Activated T-helper 1 cell treated with anti-CD3 and anti-CD28 coated beads, Interleukin-12 subunit alpha, Interleukin-12 subunit beta, Interleukin-2, Interleukin-4 antibody, amounts not matched to agents 30 ng/mL and 10 ng/mL and 1 ng/mL, durations not matched to agents 14 hours and 24 hours and 36 hours (primary cell): ENCODE measurements at regions of chr6 and their contacts with region 1.

Region 1: GRCh38 chr6:79949233-79949632 is 1.9 kb upstream of the ELOVL4 start:
- DNase-seq: peak; percentile 40
- H3K4me3 Mint-ChIP-seq: no peak overlapping the region
- H3K27ac Mint-ChIP-seq: no peak overlapping the region
- H3K4me1 Mint-ChIP-seq: peaks cover 17% of the 10 kb centered on the region
- H3K27me3 Mint-ChIP-seq: peaks cover 34% of the 10 kb centered on the region

Region 2: GRCh38 chr6:77986380-77987034 is 1962.7 kb before region 1 on chr6:
- intact Hi-C with region 1: no loop called
- DNase-seq: no peak
- H3K4me3 Mint-ChIP-seq: no peak overlapping the region
- H3K27ac Mint-ChIP-seq: no peak overlapping the region
- H3K4me1 Mint-ChIP-seq: no peaks in the 10 kb centered on the region
- H3K27me3 Mint-ChIP-seq: no peaks in the 10 kb centered on the region

Region 3: DNA sequence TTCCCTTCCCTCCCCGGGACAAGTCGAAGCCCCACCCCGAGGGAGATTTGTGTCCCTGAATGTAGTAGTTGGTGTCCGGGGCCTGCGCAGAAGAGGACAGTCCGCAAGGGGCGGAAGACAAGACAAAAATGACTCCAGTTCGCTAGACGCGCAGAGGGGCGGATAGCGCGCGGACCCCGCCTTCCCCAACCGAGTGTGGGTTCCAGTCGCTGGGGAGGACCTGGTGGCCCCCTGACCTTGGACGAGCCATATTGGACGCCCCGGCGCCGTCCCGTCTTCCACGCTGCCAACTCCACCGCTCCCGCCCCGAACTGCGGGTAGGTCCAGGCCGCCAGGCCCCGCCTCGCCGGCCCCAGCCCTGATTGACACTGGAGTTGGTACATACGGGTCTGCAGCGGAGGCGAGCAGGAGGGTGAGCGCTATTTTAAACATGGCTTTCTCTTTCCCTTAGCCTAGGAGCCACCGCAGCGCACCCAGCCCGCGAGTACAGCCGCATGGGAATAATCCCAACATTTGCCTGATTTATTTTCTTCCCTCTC is 715.6 kb before region 1 on chr6:
- intact Hi-C with region 1: loop called (anchors 5 kb)
- DNase-seq: peak; percentile 72
- H3K4me3 Mint-ChIP-seq: peak overlapping the region; percentile 95
- H3K27ac Mint-ChIP-seq: peak overlapping the region; percentile 92
- H3K4me1 Mint-ChIP-seq: peaks cover 41% of the 10 kb centered on the region
- H3K27me3 Mint-ChIP-seq: no peaks in the 10 kb centered on the region

Region 4: DNA sequence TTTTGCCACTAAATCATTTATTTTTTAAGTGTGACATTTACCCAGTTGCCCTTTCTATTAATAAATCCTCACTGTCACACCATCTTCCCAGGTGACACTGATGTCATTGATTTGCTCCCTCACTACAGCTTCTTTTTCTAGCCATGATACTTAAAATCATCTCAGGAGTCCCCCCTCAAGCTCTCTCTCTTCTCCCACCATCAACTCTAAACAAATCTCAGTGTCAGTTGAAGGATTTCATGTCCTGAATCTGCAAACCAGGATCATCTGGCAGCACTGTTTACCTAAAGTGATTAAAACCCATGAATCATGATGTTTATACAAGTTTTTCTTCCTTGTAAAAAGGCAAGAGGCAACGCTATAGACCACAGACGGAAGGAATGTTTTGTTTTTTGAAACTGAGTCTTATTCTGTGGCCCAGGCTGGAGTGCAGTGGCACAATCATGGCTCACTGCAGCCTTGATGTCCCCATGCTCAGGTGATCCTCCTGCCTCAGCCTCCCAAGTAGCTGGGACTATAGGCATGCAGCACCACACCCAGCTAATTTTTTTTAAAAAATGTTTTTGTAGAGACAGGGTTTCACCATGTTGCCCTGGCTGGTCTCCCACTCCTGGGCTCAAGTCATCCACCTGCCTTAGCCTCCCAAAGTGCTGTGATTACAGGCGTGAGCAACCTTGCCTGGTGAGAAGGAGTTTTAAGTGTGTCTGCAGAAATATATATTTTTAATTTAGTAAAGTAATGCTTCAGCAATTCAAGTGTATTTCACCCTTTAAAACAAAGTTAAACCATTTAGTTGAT is 348.2 kb before region 1 on chr6:
- intact Hi-C with region 1: no loop called
- DNase-seq: no peak
- H3K4me3 Mint-ChIP-seq: no peak overlapping the region
- H3K27ac Mint-ChIP-seq: no peak overlapping the region
- H3K4me1 Mint-ChIP-seq: no peaks in the 10 kb centered on the region
- H3K27me3 Mint-ChIP-seq: no peaks in the 10 kb centered on the region

Region 5: GRCh38 chr6:79777713-79778579 is 171.3 kb before region 1 on chr6:
- intact Hi-C with region 1: loop called (anchors 2 kb)
- DNase-seq: peak; percentile 85
- H3K4me3 Mint-ChIP-seq: peak overlapping the region; percentile 67
- H3K27ac Mint-ChIP-seq: peak overlapping the region; percentile 21
- H3K4me1 Mint-ChIP-seq: peaks cover 10% of the 10 kb centered on the region
- H3K27me3 Mint-ChIP-seq: no peaks in the 10 kb centered on the region

Region 6: DNA sequence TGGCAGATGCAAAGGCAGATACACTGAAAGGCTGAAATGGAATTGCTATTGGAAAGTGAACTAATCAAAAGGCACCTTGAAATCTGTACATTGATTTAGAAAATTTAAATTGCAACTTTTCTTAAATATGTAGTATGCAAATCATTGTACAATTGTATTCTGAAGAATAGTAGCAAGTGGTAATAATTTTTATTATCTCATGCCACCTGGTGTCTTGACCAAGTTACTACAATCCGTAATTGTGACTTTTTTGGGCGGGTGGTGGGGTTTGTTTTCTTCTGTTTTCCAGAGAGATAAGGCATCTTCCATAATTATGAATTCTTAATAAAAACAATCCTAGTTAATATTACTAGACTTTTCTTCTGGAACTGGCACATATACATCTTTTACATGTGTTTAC is 144.8 kb after region 1 on chr6:
- intact Hi-C with region 1: loop called (anchors 1 kb)
- DNase-seq: no peak
- H3K4me3 Mint-ChIP-seq: no peak overlapping the region
- H3K27ac Mint-ChIP-seq: no peak overlapping the region
- H3K4me1 Mint-ChIP-seq: peaks cover 9% of the 10 kb centered on the region
- H3K27me3 Mint-ChIP-seq: peaks cover 12% of the 10 kb centered on the region

Region 7: DNA sequence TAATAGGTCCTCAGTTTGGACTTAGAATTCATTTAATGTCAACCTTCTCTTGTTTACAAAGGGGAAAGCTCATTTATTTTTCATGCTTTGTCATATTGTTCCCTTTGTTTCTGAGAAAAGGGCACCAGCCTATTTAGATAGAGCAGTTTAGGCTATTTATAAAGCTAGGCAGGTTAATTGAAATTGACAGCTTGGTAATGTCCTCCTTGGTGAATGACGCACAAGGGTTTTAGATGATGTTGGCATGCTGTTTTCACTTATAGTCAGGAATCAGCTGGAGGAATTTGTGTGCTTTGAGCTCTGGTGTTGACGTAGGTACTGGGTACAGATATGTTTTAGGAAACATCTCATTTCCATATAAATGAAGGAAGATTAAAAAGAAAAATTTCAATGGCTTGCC is 202.4 kb after region 1 on chr6:
- intact Hi-C with region 1: loop called (anchors 1 kb)
- DNase-seq: no peak
- H3K4me3 Mint-ChIP-seq: no peak overlapping the region
- H3K27ac Mint-ChIP-seq: no peak overlapping the region
- H3K4me1 Mint-ChIP-seq: no peaks in the 10 kb centered on the region
- H3K27me3 Mint-ChIP-seq: no peaks in the 10 kb centered on the region

Region 8: DNA sequence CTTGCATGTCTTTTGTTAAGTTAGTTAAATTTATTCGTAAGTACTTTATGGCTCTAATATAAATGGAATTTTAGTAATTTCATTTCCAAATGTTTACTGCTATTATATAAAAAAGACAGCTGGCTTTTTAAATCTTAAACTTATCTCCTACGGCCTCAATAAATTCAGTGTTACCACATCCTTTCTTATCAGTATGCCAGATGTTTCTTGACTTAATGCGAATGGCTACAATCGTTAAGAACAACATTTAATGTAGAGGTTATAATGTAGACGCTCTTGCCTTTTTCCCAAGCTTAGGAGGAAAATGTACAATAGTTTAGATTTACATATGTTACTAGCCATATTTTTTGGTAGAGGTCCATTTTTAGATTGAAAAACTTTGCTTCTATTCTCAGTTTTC is 1143.8 kb after region 1 on chr6:
- intact Hi-C with region 1: no loop called
- DNase-seq: no peak
- H3K4me3 Mint-ChIP-seq: no peak overlapping the region
- H3K27ac Mint-ChIP-seq: no peak overlapping the region
- H3K4me1 Mint-ChIP-seq: no peaks in the 10 kb centered on the region
- H3K27me3 Mint-ChIP-seq: no peaks in the 10 kb centered on the region

Region 9: GRCh38 chr6:81752138-81752920 is 1803.1 kb after region 1 on chr6 and contains the start of gene TENT5A:
- intact Hi-C with region 1: loop called (anchors 10 kb)
- DNase-seq: peak; percentile 78
- H3K4me3 Mint-ChIP-seq: peak within 1 kb of the TSS; percentile 88
- H3K27ac Mint-ChIP-seq: peak within 1 kb of the TSS; percentile 72
- H3K4me1 Mint-ChIP-seq: peaks cover 16% of the 10 kb centered on the region
- H3K27me3 Mint-ChIP-seq: peaks cover 43% of the 10 kb centered on the region
- total RNA-seq, gene TENT5A: 0.34 and 0.47 TPM in 2 replicates